Dorsolateral prefrontal cortex (tissue), 120 donors: ENCODE measurements at regions of chr22 and their contacts with region 1.

Region 1: DNA sequence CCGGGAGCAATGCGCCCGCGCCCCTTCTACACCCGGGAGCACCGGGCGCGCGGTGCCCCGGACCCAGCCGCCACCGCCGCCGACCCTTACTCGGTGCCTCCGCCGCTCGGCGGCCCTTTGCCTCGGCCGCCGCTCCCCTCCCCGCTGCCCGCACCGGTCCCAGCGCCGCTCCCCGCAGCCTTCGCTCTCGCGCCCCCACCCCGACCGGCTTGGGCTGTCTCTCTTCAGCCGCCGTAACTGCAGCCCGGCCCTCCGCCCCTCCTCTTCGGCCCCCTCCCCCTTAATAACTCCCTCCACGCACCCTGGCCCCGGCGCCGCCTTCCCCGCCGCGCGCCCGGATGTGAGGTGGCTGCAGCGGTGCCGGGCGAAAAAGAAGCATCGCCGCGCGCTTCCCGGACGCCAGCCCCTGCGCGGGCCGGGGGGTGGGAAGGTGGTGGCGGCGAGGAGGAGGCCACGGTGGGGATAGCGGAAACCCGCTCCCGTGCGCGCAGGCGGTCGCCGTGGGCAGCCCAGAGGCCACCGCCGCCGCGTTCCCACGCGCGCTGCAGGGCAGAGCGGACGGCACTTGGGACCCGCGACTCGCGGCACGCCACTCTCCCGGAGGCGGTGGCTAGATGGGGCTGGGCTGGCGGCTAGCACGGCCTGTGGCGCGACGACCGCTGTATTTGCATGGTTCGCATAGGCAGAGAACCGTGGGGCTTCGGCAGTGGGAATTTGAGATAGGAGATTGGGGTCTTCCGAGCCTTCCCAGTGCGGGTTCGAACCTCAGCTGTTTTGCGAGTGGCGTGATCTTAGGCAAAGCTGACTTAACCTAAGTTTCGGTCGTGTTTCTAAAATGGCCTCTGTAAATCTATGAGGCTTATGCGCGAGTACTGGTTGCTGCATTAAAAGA is at the start of gene EIF4ENIF1:
- DNase-seq: peak; percentile 77 to 89 (median 84)
- H3K4me3 ChIP-seq: peak within 1 kb of the TSS; percentile 66 to 96 (median 88)
- H3K27ac ChIP-seq: peak within 1 kb of the TSS; percentile 82 to 99 (median 97)
- H3K27me3 ChIP-seq: no peaks in the 10 kb centered on the region
- CTCF ChIP-seq: peak in 14 of 56 donors; percentile 2 to 34 (median 14)
- total RNA-seq, gene EIF4ENIF1: 35.4 to 72.5 (median 51.8) TPM

Region 2: GRCh38 chr22:31345331-31346254 is 144.3 kb before region 1 on chr22:
- intact Hi-C with region 1: loop called (anchors 5 kb)
- DNase-seq: peak; percentile 58 to 86 (median 79)
- H3K4me3 ChIP-seq: peak overlapping the region; percentile 54 to 93 (median 79)
- H3K27ac ChIP-seq: peak overlapping the region; percentile 14 to 98 (median 94)
- H3K27me3 ChIP-seq: no peaks in the 10 kb centered on the region
- CTCF ChIP-seq: peak; percentile 25 to 95 (median 74)

Region 3: GRCh38 chr22:31399211-31400028 is 90.4 kb before region 1 on chr22 and contains the start of gene DRG1:
- intact Hi-C with region 1: loop called (anchors 2 to 5 kb)
- DNase-seq: peak; percentile 96 to 99 (median 97)
- H3K4me3 ChIP-seq: peak within 1 kb of the TSS; percentile 67 to 100 (median 94)
- H3K27ac ChIP-seq: peak within 1 kb of the TSS; percentile 54 to 98 (median 90)
- H3K27me3 ChIP-seq: no peaks in the 10 kb centered on the region
- CTCF ChIP-seq: peak in 46 of 56 donors; percentile 19 to 69 (median 49)
- total RNA-seq, gene DRG1: 27.5 to 88.4 (median 56.9) TPM

Region 4: DNA sequence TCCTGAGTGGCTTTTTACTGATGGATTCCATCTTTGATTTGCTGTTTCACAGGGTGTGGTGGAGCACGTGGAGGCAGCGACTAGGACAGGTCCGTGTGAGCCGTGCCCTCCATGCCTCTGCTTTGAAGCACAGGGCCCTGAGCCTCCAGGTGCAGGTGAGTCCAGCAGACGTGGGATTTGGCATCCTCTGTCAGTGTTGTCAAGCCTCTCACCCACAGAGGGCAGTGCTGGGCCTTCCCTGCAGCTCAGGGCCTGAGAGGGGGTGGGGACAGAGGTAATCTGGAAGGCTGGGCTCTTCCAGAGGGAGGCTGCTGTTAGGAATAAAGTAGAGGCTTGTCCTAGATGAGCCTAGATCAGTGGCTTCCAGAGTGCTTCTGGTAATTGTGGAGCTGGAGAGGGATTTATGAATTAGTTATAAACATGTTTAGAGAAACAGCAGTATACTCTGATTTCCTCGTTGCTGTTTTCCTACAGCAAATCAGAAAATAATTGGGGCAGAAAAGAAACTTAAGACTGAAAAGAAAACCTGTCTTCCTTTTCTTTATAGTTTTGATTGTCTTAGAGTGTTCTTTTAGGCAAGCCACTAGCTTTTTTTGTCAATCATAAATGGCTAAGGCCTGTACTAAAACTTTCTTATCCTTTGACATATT is 71.5 kb after region 1 on chr22:
- intact Hi-C with region 1: no loop called
- DNase-seq: peak; percentile 47 to 92 (median 74)
- H3K4me3 ChIP-seq: no peak overlapping the region
- H3K27ac ChIP-seq: peak overlapping the region in 34 of 59 donors; percentile 0 to 70 (median 39)
- H3K27me3 ChIP-seq: no peaks in the 10 kb centered on the region
- CTCF ChIP-seq: peak; percentile 27 to 87 (median 75)

Region 5: GRCh38 chr22:32411829-32412592 is 922.2 kb after region 1 on chr22 and contains the start of gene RTCB:
- intact Hi-C with region 1: loop called in 1 of 2 experiments (anchors 5 kb)
- DNase-seq: peak; percentile 81 to 94 (median 88)
- H3K4me3 ChIP-seq: peak within 1 kb of the TSS; percentile 63 to 100 (median 92)
- H3K27ac ChIP-seq: peak within 1 kb of the TSS in 51 of 59 donors; percentile 16 to 86 (median 56)
- H3K27me3 ChIP-seq: no peaks in the 10 kb centered on the region
- CTCF ChIP-seq: peak in 48 of 56 donors; percentile 8 to 66 (median 36)
- total RNA-seq, gene RTCB: 34.6 to 76.6 (median 58.4) TPM